ENCODE measurements at regions of chr1 and their contacts with region 1.

Region 1: GRCh38 chr1:160646711-160647328 is at the start of gene SLAMF1:
- DNase-seq: no peak
- H3K4me3 Mint-ChIP-seq: peak within 1 kb of the TSS; percentile 98
- H3K27ac Mint-ChIP-seq: peak within 1 kb of the TSS; percentile 96
- H3K4me1 Mint-ChIP-seq: peaks cover 65% of the 10 kb centered on the region
- H3K27me3 Mint-ChIP-seq: no peaks in the 10 kb centered on the region
- total RNA-seq, gene SLAMF1: 118 TPM in 2 replicates

Region 2: GRCh38 chr1:160658162-160658813 is 11.5 kb after region 1 on chr1:
- intact Hi-C with region 1: loop called (anchors 1 kb)
- DNase-seq: no peak
- H3K4me3 Mint-ChIP-seq: peak overlapping the region; percentile 8
- H3K27ac Mint-ChIP-seq: peak overlapping the region; percentile 64
- H3K4me1 Mint-ChIP-seq: peaks cover 75% of the 10 kb centered on the region
- H3K27me3 Mint-ChIP-seq: no peaks in the 10 kb centered on the region

Region 3: GRCh38 chr1:160664573-160665051 is 17.8 kb after region 1 on chr1:
- intact Hi-C with region 1: loop called (anchors 1 kb)
- DNase-seq: no peak
- H3K4me3 Mint-ChIP-seq: peak overlapping the region; percentile 81
- H3K27ac Mint-ChIP-seq: peak overlapping the region; percentile 96
- H3K4me1 Mint-ChIP-seq: peaks cover 84% of the 10 kb centered on the region
- H3K27me3 Mint-ChIP-seq: no peaks in the 10 kb centered on the region

Region 4: GRCh38 chr1:161054805-161055204 is 408.0 kb after region 1 on chr1:
- intact Hi-C with region 1: no loop called
- DNase-seq: no peak
- H3K4me3 Mint-ChIP-seq: no peak overlapping the region
- H3K27ac Mint-ChIP-seq: no peak overlapping the region
- H3K4me1 Mint-ChIP-seq: peaks cover 26% of the 10 kb centered on the region
- H3K27me3 Mint-ChIP-seq: no peaks in the 10 kb centered on the region